K562 (cell line): ENCODE measurements at regions of chr14 and their contacts with region 1.

Region 1: DNA sequence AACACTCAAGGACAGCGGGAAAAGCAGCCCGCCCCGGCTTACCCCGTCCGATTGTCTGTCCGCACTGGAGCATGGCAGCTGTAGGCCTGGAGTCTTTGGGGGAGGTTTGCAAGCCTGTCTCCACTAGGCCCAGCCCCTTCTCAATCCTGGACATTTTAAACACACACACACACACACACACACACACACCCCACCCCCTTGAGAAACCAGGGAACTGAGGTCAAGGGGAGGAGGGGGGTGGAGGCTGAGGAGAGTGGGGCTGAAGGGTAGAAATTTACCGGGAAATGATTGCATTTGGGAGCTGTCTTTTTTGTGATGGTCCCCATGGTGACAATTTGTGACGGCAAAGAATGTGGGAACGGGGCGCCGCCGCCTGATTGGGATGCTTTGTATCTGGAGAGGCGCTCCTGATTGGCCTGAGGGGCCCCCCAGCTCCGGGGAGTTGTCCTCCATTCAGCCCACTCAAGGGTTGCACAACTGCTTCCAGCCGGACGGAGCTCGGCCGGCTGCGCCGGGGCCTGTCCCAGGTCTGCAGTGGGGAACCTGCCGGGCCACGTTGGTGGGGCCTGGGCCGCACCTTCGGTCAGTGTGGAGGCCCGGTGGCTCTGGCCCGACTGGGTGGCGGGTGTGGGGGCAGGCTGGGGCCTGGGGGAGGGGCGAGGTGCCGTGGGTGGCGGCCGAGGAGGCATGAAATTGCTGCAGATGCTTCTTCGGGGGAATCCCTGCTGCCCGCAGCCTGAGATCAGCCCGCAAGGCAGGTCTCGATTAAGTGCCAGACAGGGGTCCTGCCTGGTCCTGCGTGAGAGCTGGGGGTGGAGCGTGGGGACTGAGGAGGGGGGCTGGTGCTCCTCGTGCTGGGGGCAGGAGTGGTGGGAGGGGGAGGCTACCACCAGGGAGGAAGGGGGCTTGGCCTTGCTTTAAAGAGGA is at the start of gene FAM181A:
- DNase-seq: no peak
- ATAC-seq: no peak
- H3K4me3 ChIP-seq: no peak within 1 kb of the TSS
- H3K27ac ChIP-seq: no peak within 1 kb of the TSS
- H3K4me1 ChIP-seq: no peaks in the 10 kb centered on the region
- H3K27me3 ChIP-seq: peaks cover 0 to 21% of the 10 kb centered on the region in 2 experiments; a peak in 3 of 5 replicates
- CTCF ChIP-seq: no peak
- EP300 ChIP-seq: no peak
- POLR2A ChIP-seq: no peak
- RAD21 ChIP-seq: no peak
- polyA plus RNA-seq, gene FAM181A: not detected

Region 2: DNA sequence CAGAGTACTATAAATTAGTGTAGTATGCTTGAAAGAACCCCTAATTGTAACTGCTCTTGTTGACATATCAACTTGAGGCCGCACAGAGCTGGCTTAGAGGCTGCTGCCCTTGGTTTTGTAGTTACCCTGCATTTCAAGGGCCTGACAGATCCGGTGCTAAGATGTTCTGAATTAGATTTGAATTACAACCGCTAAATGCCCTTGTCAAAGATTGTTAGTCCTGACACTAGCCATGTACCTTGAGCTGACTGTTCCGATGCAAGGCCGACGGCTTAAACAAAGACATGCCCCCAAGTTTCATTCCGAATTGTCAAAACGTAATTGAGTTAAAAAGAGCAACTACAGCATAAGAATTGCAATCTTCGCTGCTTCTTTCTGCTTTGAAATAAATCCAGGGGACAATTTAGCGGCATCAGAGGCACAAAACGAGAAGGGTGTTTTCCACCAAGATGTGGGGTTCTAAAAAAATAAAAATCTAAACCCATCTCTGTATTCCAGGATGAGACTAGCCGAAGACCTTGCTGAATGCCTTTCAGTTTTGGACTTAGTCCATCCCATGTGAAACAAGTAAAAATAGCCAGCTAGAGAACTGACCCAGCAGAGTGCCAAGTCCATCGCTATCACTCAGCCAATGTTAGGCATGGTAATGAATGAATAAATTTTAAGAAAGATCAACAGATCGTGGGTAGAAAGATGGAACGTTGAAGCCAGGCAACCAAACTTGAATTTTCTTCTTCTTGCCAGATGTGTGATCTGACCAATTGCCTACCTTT is 1081.5 kb after region 1 on chr14:
- CTCF ChIA-PET with region 1: no interaction called
- POLR2A ChIA-PET with region 1: no interaction called
- in situ Hi-C with region 1: no loop called
- intact Hi-C with region 1: loop called (anchors 10 kb)
- DNase-seq: no peak
- ATAC-seq: no peak
- H3K4me3 ChIP-seq: no peak overlapping the region
- H3K27ac ChIP-seq: no peak overlapping the region
- H3K4me1 ChIP-seq: no peaks in the 10 kb centered on the region
- H3K27me3 ChIP-seq: peaks cover 3 to 33% of the 10 kb centered on the region in 2 experiments; a peak in 4 of 5 replicates
- CTCF ChIP-seq: no peak
- EP300 ChIP-seq: no peak
- POLR2A ChIP-seq: no peak
- RAD21 ChIP-seq: no peak